Right ventricle myocardium superior (tissue), 1 donor: ENCODE measurements at regions of chr1 and their contacts with region 1.

Region 1: DNA sequence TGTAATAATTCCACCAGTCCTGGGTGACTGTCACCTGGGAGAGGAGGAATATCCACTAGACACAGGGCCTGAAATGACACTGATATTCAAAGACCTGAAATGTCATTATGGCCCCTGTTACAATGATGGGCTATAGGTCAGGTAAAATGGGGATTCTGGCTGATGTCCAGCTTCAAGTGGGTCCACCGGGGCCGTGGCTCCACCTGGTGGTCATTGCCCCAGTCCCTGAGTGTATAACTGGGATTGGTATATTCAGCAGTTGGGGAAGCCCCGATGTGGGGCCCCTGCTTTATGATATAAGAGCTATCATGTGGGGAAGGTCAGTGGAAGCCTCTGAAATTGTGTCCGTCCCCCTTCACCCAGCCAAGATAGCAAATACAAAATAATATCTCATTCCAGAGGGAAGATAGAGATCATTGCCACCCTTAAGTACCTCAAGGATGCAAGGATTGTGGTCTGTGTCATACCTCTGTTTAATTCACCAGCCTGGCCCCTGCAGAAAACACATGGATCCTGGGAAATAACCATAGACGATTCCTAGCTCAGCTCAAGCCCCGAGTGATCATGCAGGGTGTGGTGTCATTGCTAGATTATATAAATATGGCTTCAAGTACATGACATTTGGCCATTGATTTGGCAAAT is 19.4 kb downstream of the PLEKHO1 start:
- DNase-seq: peak; percentile 81
- ATAC-seq: peak; percentile 69

Region 2: DNA sequence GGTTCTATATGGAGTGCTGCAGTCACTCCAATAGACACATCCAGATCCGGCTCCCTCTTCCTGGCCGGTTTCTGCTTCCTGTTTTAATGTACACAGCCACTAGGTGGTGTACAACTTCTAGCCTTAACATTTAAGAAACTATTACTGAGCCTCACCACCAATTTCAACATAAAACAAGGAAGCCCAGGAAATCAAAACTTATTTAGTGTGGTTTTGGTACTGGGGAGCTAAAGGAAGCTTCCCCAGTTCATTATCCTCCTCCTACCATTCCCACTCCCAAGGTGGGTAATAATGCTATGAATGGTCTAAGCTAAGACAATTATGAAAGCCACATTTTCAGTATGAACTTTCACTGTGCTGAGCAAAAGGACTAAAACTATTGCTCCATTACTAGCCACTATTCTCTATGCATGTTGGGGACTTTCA is 206.9 kb before region 1 on chr1:
- intact Hi-C with region 1: loop called (anchors 5 kb)
- DNase-seq: no peak
- ATAC-seq: peak; percentile 94

Region 3: DNA sequence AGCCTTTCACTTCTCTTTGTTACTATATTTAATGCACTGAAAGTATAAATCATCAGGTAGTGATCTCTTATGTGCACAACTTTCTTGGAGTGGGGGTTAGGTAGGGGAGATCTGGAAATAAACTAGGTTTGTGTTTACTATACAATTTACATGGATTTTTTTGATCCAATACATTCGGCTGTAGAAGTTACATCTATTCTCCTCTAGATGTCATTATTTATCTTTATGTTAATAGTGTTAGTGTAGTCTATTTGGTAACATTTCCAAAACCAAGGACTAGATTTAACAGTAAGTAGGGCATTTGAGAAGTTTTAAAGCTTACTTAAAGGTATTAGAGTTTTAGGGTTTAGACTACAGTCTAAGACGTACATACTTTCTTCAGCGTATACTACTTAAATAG is 96.1 kb before region 1 on chr1:
- intact Hi-C with region 1: loop called (anchors 5 kb)
- DNase-seq: no peak
- ATAC-seq: peak; percentile 56